ENCODE measurements at regions of chr2 and their contacts with region 1.

Region 1: DNA sequence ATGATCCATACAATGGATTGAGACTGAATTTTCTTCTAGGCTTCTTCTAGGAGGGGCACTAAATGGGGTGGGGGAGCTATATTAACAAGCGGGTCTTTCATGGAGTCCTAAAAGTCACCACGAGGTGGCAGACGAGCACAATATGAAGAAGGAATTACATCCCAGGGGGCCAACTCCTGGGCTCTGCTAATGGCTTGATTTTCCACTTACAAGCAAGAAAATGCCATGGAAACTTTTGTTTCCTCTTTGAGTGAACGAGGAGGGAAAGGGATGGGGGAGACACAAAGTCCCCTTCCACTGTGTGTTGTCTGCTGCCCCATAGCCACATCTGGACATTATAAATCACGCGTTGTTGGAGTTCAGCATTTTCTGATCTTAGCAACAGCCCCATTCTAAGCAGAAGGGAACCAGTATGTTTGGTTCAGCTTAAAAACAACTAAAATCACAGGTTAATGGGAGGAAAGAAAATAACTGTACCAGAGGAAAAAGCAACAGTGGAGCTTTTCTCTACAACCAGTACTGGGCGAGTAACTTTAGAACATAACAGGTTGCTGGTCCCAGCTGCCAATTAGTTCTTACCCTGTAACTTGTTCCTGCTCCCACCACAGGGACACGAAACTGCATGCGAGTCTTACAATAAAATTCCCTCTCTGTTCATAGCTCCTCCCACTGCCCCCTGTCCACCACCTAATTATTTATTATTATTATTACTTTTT is 285.0 kb upstream of the PARD3B start:
- DNase-seq: peak; percentile 71 to 75
- H3K4me3 ChIP-seq: no peak overlapping the region
- H3K4me3 Mint-ChIP-seq: no peak overlapping the region
- H3K27ac Mint-ChIP-seq: no peak overlapping the region
- H3K4me1 ChIP-seq: peaks cover 9% of the 10 kb centered on the region; the same call in 1 of the 2 replicates
- H3K4me1 Mint-ChIP-seq: peaks cover 26% of the 10 kb centered on the region
- H3K27me3 ChIP-seq: no peaks in the 10 kb centered on the region
- H3K27me3 Mint-ChIP-seq: no peaks in the 10 kb centered on the region
- CTCF ChIP-seq: peak; percentile 81 to 88

Region 2: GRCh38 chr2:204024503-204024902 is 235.8 kb before region 1 on chr2:
- CTCF ChIA-PET with region 1: no interaction called
- POLR2A ChIA-PET with region 1: no interaction called
- intact Hi-C with region 1: loop called (anchors 2 kb)
- DNase-seq: peak; percentile 42 to 70
- H3K4me3 ChIP-seq: no peak overlapping the region
- H3K4me3 Mint-ChIP-seq: no peak overlapping the region
- H3K27ac Mint-ChIP-seq: no peak overlapping the region
- H3K4me1 ChIP-seq: no peaks in the 10 kb centered on the region
- H3K4me1 Mint-ChIP-seq: no peaks in the 10 kb centered on the region
- H3K27me3 ChIP-seq: no peaks in the 10 kb centered on the region
- H3K27me3 Mint-ChIP-seq: no peaks in the 10 kb centered on the region
- CTCF ChIP-seq: peak; percentile 65 to 75

Region 3: GRCh38 chr2:204145263-204145751 is 115.0 kb before region 1 on chr2:
- CTCF ChIA-PET with region 1: interaction called, 12 read pairs
- POLR2A ChIA-PET with region 1: no interaction called
- intact Hi-C with region 1: loop called (anchors 1 kb)
- DNase-seq: peak; percentile 84 to 90
- H3K4me3 ChIP-seq: peak overlapping the region; percentile 45
- H3K4me3 Mint-ChIP-seq: peak overlapping the region; percentile 75
- H3K27ac Mint-ChIP-seq: peak overlapping the region; percentile 73
- H3K4me1 ChIP-seq: peaks cover 4% of the 10 kb centered on the region; the same call in 1 of the 2 replicates
- H3K4me1 Mint-ChIP-seq: no peaks in the 10 kb centered on the region
- H3K27me3 ChIP-seq: no peaks in the 10 kb centered on the region; the same call in 1 of the 2 replicates
- H3K27me3 Mint-ChIP-seq: peaks cover 19% of the 10 kb centered on the region
- CTCF ChIP-seq: peak; percentile 90 to 97

Region 4: GRCh38 chr2:204545023-204545860 is 284.9 kb after region 1 on chr2 and contains the start of gene PARD3B:
- CTCF ChIA-PET with region 1: no interaction called
- POLR2A ChIA-PET with region 1: no interaction called
- intact Hi-C with region 1: loop called (anchors 5 kb)
- DNase-seq: peak; percentile 89 to 91
- H3K4me3 ChIP-seq: peak within 1 kb of the TSS; percentile 69
- H3K4me3 Mint-ChIP-seq: peak within 1 kb of the TSS; percentile 99
- H3K27ac Mint-ChIP-seq: peak within 1 kb of the TSS; percentile 99
- H3K4me1 ChIP-seq: peaks cover 39% of the 10 kb centered on the region
- H3K4me1 Mint-ChIP-seq: peaks cover 27% of the 10 kb centered on the region
- H3K27me3 ChIP-seq: no peaks in the 10 kb centered on the region
- H3K27me3 Mint-ChIP-seq: no peaks in the 10 kb centered on the region
- CTCF ChIP-seq: no peak
- total RNA-seq, gene PARD3B: 66.5 and 68.9 TPM in 2 replicates

Region 5: DNA sequence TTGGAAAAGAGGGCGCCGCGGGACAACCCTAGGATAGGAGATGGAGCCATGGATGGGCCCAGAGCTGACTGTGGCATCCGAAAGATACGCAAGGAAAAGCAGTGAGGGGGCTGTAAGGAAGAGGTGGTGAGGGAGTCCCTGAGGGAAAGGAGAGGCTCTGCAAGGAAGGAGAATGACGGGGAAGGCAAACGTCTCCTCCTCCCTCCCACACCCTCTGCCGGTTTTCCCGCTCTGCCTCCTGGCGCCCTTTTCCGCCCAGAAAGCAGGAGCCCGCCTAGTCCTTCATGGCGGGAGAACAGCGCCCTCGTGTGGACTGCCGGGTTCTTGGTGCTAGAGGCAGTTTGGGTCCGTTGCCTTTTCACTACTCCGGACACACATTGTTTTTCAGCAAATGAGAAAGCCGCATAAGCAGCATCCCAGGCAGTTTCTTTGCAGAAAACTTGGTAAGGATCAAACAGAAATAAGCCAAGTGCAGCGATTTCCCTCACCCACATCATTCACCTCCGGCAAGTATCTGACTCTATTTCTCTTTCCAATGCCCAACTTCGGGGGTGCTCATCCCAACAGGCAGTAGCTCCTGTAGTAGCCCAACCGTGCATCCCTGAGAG is 1625.3 kb after region 1 on chr2:
- CTCF ChIA-PET with region 1: no interaction called
- POLR2A ChIA-PET with region 1: no interaction called
- intact Hi-C with region 1: loop called (anchors 10 kb)
- DNase-seq: peak; percentile 81 to 86
- H3K4me3 ChIP-seq: no peak overlapping the region
- H3K4me3 Mint-ChIP-seq: no peak overlapping the region
- H3K27ac Mint-ChIP-seq: no peak overlapping the region
- H3K4me1 ChIP-seq: no peaks in the 10 kb centered on the region
- H3K4me1 Mint-ChIP-seq: no peaks in the 10 kb centered on the region
- H3K27me3 ChIP-seq: no peaks in the 10 kb centered on the region
- H3K27me3 Mint-ChIP-seq: peaks cover 3% of the 10 kb centered on the region
- CTCF ChIP-seq: peak; percentile 77 to 90